ENCODE measurements at regions of chr1 and their contacts with region 1.

Region 1: GRCh38 chr1:192477630-192478029 is 97.9 kb upstream of the RGS1 start:
- DNase-seq: no peak
- ATAC-seq: peak; percentile 63
- H3K4me3 Mint-ChIP-seq: no peak overlapping the region
- H3K27ac Mint-ChIP-seq: no peak overlapping the region
- H3K4me1 Mint-ChIP-seq: no peaks in the 10 kb centered on the region
- H3K27me3 Mint-ChIP-seq: peaks cover 4% of the 10 kb centered on the region

Region 2: GRCh38 chr1:192445848-192446489 is 31.7 kb before region 1 on chr1:
- CTCF ChIA-PET with region 1: no interaction called
- DNase-seq: peak; percentile 60
- ATAC-seq: no peak
- H3K4me3 Mint-ChIP-seq: no peak overlapping the region
- H3K27ac Mint-ChIP-seq: no peak overlapping the region
- H3K4me1 Mint-ChIP-seq: peaks cover 2% of the 10 kb centered on the region
- H3K27me3 Mint-ChIP-seq: peaks cover 26% of the 10 kb centered on the region

Region 3: DNA sequence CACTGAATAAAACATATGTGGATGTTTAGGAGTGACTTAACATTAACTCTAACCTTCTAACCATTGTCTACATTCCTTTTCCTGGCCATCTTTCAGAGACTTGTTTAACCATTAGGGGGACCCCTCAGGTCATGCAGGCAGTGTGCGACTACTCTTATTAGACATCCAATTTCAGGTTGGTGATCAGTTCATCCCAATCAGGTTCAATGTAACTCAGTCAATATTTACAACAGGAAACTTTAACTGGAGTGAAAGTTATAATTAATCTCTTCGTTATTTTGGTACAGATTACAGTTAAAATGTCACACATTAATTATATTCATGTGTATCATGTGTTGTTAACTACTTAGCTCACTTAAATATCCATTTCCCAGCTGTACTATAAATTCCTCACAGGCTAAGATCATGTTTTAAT is 29.1 kb after region 1 on chr1:
- CTCF ChIA-PET with region 1: interaction called, 10 read pairs
- DNase-seq: peak; percentile 51
- ATAC-seq: peak; percentile 66
- H3K4me3 Mint-ChIP-seq: no peak overlapping the region
- H3K27ac Mint-ChIP-seq: no peak overlapping the region
- H3K4me1 Mint-ChIP-seq: peaks cover 3% of the 10 kb centered on the region
- H3K27me3 Mint-ChIP-seq: no peaks in the 10 kb centered on the region

Region 4: GRCh38 chr1:192580351-192580962 is 102.8 kb after region 1 on chr1:
- CTCF ChIA-PET with region 1: interaction called, 21 read pairs
- DNase-seq: no peak
- ATAC-seq: peak; percentile 31
- H3K4me3 Mint-ChIP-seq: no peak overlapping the region
- H3K27ac Mint-ChIP-seq: no peak overlapping the region
- H3K4me1 Mint-ChIP-seq: peaks cover 47% of the 10 kb centered on the region
- H3K27me3 Mint-ChIP-seq: no peaks in the 10 kb centered on the region

Region 5: DNA sequence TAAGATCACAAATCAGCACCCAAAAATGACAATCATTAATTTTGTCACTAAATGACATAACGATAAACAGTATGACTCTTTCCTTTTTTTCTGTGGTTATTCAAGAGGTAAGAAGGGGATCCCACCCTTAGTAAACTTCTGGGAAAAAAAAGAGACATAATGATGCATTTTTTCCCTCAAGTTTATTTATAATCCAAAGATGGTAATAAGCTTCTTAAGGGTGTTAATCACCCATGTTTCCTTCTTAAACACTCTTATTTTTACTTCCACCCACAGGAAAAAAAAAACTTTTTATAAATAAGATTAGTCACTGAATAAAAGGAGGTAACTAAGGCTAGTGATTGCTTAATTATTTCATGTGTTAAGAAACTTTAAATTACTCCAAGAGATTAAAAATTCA is 122.6 kb after region 1 on chr1:
- CTCF ChIA-PET with region 1: interaction called, 29 read pairs
- DNase-seq: no peak
- ATAC-seq: no peak
- H3K4me3 Mint-ChIP-seq: no peak overlapping the region
- H3K27ac Mint-ChIP-seq: no peak overlapping the region
- H3K4me1 Mint-ChIP-seq: peaks cover 38% of the 10 kb centered on the region
- H3K27me3 Mint-ChIP-seq: peaks cover 2% of the 10 kb centered on the region

Region 6: GRCh38 chr1:192609110-192610079 is 131.8 kb after region 1 on chr1:
- CTCF ChIA-PET with region 1: interaction called, 29 read pairs
- DNase-seq: peak; percentile 86
- ATAC-seq: peak; percentile 99
- H3K4me3 Mint-ChIP-seq: peak overlapping the region; percentile 46
- H3K27ac Mint-ChIP-seq: peak overlapping the region; percentile 75
- H3K4me1 Mint-ChIP-seq: peaks cover 24% of the 10 kb centered on the region
- H3K27me3 Mint-ChIP-seq: no peaks in the 10 kb centered on the region

Region 7: DNA sequence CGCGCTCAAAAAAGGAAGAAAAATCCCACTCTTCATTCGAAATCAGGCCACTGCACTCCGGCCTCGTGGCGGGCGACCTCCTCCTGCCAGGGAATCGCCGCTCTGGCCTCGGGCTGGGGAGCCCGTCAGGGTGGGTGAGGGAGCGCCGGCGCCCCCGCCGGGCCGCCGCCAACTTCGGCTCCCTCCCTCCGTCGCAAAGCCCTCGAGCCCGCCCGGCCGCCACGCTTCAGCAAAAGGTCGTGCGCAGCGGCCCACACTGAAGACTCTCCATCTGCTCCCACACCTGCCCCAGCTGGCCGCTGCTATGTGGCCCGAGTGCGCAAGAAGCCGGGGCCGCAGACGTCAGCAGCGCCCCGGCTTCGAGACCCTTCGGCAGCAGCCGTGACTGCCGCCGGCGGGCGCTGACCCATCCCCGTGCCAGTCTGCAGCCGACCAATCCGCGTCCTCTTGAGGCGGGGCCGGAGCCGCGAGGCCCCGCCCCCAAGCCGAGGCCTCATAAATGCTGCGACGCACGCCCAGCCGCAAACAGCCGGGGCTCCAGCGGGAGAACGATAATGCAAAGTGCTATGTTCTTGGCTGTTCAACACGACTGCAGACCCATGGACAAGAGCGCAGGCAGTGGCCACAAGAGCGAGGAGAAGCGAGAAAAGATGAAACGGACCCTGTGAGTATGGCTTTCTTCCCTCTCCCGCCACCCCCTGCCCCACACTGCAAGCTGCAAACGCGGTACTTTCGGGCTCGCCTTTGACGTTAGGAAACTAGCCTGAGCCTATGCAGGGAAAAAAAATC is 331.1 kb after region 1 on chr1 and contains the start of gene RGS2:
- CTCF ChIA-PET with region 1: interaction called, 10 read pairs
- DNase-seq: peak; percentile 91
- ATAC-seq: peak; percentile 92
- H3K4me3 Mint-ChIP-seq: peak within 1 kb of the TSS; percentile 92
- H3K27ac Mint-ChIP-seq: peak within 1 kb of the TSS; percentile 94
- H3K4me1 Mint-ChIP-seq: peaks cover 31% of the 10 kb centered on the region
- H3K27me3 Mint-ChIP-seq: no peaks in the 10 kb centered on the region
- total RNA-seq, gene RGS2: 9.7 to 10.6 TPM

Measured in activated CD8-positive, alpha-beta memory T cell treated with anti-CD3 and anti-CD28 coated beads, Interleukin-2, amount 10 ng/mL, durations not matched to agents 7 days and 5 days (primary cell).